Endothelial cell of umbilical vein (primary cell): ENCODE measurements at regions of chr12 and their contacts with region 1.

Region 1: DNA sequence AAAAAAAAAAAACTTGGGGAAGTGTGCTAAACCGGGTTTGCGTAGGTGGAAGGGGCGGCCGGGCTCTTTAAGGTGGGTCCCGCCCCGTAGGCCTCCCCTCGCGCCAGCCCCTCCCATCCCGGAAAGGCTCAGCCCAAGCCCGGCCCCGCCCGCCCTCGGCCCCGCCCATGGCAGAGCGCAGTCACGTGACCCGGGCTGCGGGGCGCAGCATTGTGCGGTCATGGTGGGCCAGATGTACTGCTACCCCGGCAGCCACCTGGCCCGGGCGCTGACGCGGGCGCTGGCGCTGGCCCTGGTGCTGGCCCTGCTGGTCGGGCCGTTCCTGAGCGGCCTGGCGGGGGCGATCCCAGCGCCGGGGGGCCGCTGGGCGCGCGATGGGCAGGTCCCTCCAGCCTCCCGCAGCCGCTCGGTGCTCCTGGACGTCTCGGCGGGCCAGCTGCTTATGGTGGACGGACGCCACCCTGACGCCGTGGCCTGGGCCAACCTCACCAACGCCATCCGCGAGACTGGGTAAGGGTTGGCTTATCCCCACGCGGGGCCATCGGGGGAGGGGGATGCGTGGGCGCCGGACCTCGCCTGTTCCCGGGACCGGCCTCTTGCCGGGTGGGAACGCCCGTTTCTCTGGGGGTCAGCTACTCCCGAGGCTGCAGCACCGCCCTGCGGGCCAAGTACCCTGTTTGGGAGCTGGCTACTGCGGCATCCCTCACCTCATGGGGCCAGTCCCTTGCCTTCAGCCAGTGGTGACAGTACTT is at the start of gene PLBD2:
- DNase-seq: peak; percentile 95
- H3K4me3 ChIP-seq: peak within 1 kb of the TSS; percentile 35 to 62 (median 57)
- H3K27ac ChIP-seq: peak within 1 kb of the TSS; percentile 20
- H3K4me1 ChIP-seq: peaks cover 6% of the 10 kb centered on the region
- H3K27me3 ChIP-seq: no peaks in the 10 kb centered on the region
- CTCF ChIP-seq: no peak
- POLR2A ChIP-seq: peak; percentile 70
- total RNA-seq, gene PLBD2: 44.8 and 46.8 TPM in 2 replicates

Region 2: DNA sequence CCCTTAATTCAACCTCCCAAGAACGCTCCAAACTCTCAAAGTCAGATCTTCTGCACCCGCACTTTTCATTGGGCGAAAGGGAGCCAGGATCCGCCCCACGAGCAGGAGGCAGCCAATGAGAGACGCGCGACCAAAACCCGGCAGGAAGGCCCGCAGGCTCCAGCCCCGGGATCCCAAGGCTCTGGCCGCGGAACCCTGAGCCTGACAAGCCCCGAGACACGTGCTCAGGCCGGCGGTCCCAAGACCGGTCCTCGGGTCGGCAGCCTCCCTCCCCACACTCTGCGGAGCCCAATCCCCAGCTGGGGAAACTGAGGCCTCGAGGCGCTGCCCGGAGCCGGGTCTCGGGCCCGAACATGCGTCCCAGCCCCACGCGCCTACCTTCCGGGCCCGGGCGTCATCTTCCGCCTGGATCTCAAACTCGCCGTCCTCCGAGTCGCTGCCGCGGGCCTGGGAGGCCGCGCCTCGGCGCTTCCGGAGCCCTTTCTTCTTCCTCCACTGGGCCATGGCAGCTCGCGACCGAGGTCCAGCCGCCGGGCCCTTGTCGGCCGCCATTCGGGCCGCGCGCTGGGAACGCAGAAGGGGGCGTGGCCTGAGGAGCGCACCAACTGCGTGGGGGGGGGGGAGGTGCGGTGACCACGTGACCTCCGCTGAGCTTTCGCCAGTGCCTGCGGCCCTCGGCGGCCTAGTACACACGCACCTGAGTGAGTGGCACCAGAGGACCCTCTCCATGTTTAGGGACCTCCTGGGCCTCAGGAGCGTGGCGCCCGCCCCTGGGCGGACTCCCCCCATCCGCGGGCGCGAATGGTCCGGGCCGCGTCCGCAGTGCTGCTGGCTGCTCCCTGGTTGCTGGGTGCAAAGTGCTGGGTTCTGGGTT is 173.4 kb before region 1 on chr12 and contains the starts of genes DDX54 and RITA1:
- CTCF ChIA-PET with region 1: no interaction called
- POLR2A ChIA-PET with region 1: no interaction called
- dilution Hi-C with region 1: no loop called
- intact Hi-C with region 1: loop called (anchors 1 kb)
- DNase-seq: peak; percentile 93
- H3K4me3 ChIP-seq: peak within 1 kb of the TSS; percentile 45 to 79 (median 76)
- H3K27ac ChIP-seq: peak within 1 kb of the TSS; percentile 67
- H3K4me1 ChIP-seq: peaks cover 12% of the 10 kb centered on the region
- H3K27me3 ChIP-seq: no peaks in the 10 kb centered on the region
- CTCF ChIP-seq: no peak
- POLR2A ChIP-seq: peak; percentile 91
- total RNA-seq, gene DDX54: 76.4 and 90.0 TPM in 2 replicates
- total RNA-seq, gene RITA1: 20.4 and 20.7 TPM in 2 replicates

Region 3: GRCh38 chr12:113310489-113310888 is 48.1 kb before region 1 on chr12:
- CTCF ChIA-PET with region 1: no interaction called
- POLR2A ChIA-PET with region 1: no interaction called
- dilution Hi-C with region 1: no loop called
- intact Hi-C with region 1: loop called (anchors 1 kb)
- DNase-seq: no peak
- H3K4me3 ChIP-seq: no peak overlapping the region
- H3K27ac ChIP-seq: no peak overlapping the region
- H3K4me1 ChIP-seq: no peaks in the 10 kb centered on the region
- H3K27me3 ChIP-seq: no peaks in the 10 kb centered on the region
- CTCF ChIP-seq: no peak
- POLR2A ChIP-seq: no peak

Region 4: DNA sequence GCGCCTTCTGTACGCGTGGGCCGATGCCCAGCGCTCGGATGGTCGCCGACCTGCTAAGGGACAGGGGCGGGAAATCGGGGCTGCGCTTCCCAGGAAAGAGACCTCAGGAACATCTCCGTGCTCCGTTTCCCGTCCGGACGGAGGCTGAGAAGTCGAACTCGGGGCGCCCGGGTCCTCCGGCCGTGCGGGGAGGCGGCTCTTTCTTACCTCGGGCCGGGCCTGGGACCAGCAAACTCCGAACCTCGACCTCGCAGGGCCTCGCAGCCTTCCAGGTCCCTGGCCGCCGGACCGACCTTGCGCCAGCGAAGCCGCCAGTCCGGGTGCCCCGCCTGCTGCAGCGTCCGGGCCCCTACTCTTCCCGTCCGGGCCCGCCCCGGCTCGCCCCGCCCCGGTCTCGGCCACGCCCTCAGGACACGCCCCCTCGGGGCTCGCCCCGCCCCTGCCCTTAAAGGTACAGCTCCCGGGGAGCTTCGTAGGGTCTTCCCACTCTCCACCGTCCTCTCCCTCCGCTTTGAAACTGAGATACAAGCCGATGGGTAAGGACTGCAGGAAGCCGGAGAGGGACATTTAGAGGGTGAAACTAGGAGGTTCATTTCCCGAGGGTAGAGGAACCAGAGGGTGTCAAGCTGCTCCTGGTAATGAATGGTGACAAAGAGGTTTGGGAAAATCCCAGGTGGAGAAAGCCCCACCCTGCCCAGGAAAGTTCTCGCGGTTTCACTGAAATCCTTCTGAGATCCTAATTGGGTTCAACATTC is 23.6 kb before region 1 on chr12 and contains the start of gene SLC8B1:
- CTCF ChIA-PET with region 1: interaction called, 6 read pairs
- POLR2A ChIA-PET with region 1: no interaction called
- dilution Hi-C with region 1: no loop called
- intact Hi-C with region 1: loop called (anchors 1 kb)
- DNase-seq: peak; percentile 75
- H3K4me3 ChIP-seq: peak within 1 kb of the TSS; percentile 70 to 79 (median 78)
- H3K27ac ChIP-seq: peak within 1 kb of the TSS; percentile 30
- H3K4me1 ChIP-seq: peaks cover 18% of the 10 kb centered on the region
- H3K27me3 ChIP-seq: no peaks in the 10 kb centered on the region
- CTCF ChIP-seq: no peak
- POLR2A ChIP-seq: peak; percentile 83
- total RNA-seq, gene SLC8B1: 28.4 and 29.9 TPM in 2 replicates

Region 5: GRCh38 chr12:113392988-113393579 is 34.5 kb after region 1 on chr12:
- CTCF ChIA-PET with region 1: no interaction called
- POLR2A ChIA-PET with region 1: no interaction called
- dilution Hi-C with region 1: no loop called
- intact Hi-C with region 1: no loop called
- DNase-seq: no peak
- H3K4me3 ChIP-seq: no peak overlapping the region
- H3K27ac ChIP-seq: no peak overlapping the region
- H3K4me1 ChIP-seq: no peaks in the 10 kb centered on the region
- H3K27me3 ChIP-seq: no peaks in the 10 kb centered on the region
- CTCF ChIP-seq: no peak
- POLR2A ChIP-seq: no peak